ENCODE measurements at regions of chr6 and their contacts with region 1.

Region 1: DNA sequence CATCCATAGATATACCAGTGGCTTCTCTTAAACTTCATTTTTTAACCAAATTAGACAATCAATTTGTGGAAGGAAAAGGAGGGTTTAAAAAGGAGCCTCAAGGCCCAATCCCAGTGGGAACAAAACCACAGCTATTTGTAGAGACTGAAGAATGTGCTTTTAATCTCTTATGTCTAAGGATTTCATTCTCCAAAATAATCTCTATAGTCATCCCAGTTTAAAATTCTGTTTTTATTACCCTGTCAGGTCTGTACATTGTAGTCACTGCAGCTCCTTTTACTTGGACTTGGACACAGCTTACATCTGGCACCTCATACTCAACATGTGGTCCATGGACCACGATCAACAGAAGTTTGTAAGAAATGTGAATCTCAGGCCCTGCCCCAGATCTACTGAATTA is 152.1 kb upstream of the STMND1 start:
- DNase-seq: no peak
- H3K4me3 Mint-ChIP-seq: no peak overlapping the region
- H3K27ac Mint-ChIP-seq: no peak overlapping the region
- H3K4me1 Mint-ChIP-seq: peaks cover 33% of the 10 kb centered on the region
- H3K27me3 Mint-ChIP-seq: peaks cover 40% of the 10 kb centered on the region

Region 2: GRCh38 chr6:16397623-16398022 is 552.1 kb before region 1 on chr6:
- CTCF ChIA-PET with region 1: no interaction called
- POLR2A ChIA-PET with region 1: no interaction called
- intact Hi-C with region 1: loop called (anchors 1 kb)
- DNase-seq: peak; percentile 27
- H3K4me3 Mint-ChIP-seq: no peak overlapping the region
- H3K27ac Mint-ChIP-seq: no peak overlapping the region
- H3K4me1 Mint-ChIP-seq: peaks cover 30% of the 10 kb centered on the region
- H3K27me3 Mint-ChIP-seq: no peaks in the 10 kb centered on the region

Region 3: DNA sequence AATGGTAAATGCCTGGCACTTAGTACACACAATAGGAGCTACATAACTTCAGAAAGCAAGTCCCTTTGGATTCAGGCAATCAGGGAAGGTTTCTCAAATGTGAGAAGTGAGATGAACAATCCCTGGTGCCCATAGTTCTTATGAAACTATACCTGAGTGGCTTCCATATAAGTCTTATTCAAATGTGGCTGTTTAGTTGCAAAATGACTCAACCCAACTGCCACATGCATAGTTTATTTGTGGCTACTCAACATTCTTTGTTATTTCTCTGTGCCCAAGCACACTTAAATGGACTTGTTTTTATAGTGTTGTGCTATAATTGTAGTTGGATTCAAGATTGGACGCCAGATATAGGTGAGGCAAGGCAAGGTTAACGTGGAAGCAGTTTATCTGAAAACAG is 94.7 kb before region 1 on chr6:
- CTCF ChIA-PET with region 1: no interaction called
- POLR2A ChIA-PET with region 1: no interaction called
- intact Hi-C with region 1: loop called (anchors 5 kb)
- DNase-seq: no peak
- H3K4me3 Mint-ChIP-seq: no peak overlapping the region
- H3K27ac Mint-ChIP-seq: no peak overlapping the region
- H3K4me1 Mint-ChIP-seq: peaks cover 10% of the 10 kb centered on the region
- H3K27me3 Mint-ChIP-seq: peaks cover 5% of the 10 kb centered on the region

Region 4: GRCh38 chr6:17015144-17015543 is 65.4 kb after region 1 on chr6:
- CTCF ChIA-PET with region 1: interaction called, 5 read pairs
- POLR2A ChIA-PET with region 1: no interaction called
- intact Hi-C with region 1: loop called (anchors 1 kb)
- DNase-seq: peak; percentile 44
- H3K4me3 Mint-ChIP-seq: peak overlapping the region; percentile 54
- H3K27ac Mint-ChIP-seq: no peak overlapping the region
- H3K4me1 Mint-ChIP-seq: peaks cover 18% of the 10 kb centered on the region
- H3K27me3 Mint-ChIP-seq: peaks cover 27% of the 10 kb centered on the region

Measured in activated CD4-positive, alpha-beta memory T cell treated with anti-CD3 and anti-CD28 coated beads for 36 hours (primary cell).